Endothelial cell of umbilical vein (primary cell): ENCODE measurements at regions of chr7 and their contacts with region 1.

Region 1: GRCh38 chr7:102279537-102280400 is 6.9 kb upstream of the SH2B2 start:
- DNase-seq: peak; percentile 47
- H3K4me3 ChIP-seq: no peak overlapping the region
- H3K27ac ChIP-seq: no peak overlapping the region
- H3K4me1 ChIP-seq: no peaks in the 10 kb centered on the region
- H3K27me3 ChIP-seq: peaks cover 0 to 2% of the 10 kb centered on the region in 2 experiments
- CTCF ChIP-seq: peak; percentile 75 to 93
- POLR2A ChIP-seq: no peak

Region 2: GRCh38 chr7:102390697-102391484 is 111.1 kb after region 1 on chr7:
- CTCF ChIA-PET with region 1: interaction called, 32 read pairs
- POLR2A ChIA-PET with region 1: interaction called, 4 read pairs
- dilution Hi-C with region 1: no loop called
- intact Hi-C with region 1: loop called (anchors 1 kb)
- DNase-seq: peak; percentile 73
- H3K4me3 ChIP-seq: no peak overlapping the region
- H3K27ac ChIP-seq: no peak overlapping the region
- H3K4me1 ChIP-seq: peaks cover 6% of the 10 kb centered on the region
- H3K27me3 ChIP-seq: no peaks in the 10 kb centered on the region
- CTCF ChIP-seq: peak; percentile 90 to 97
- POLR2A ChIP-seq: no peak